A549 (cell line): ENCODE measurements at regions of chr7 and their contacts with region 1.

Region 1: DNA sequence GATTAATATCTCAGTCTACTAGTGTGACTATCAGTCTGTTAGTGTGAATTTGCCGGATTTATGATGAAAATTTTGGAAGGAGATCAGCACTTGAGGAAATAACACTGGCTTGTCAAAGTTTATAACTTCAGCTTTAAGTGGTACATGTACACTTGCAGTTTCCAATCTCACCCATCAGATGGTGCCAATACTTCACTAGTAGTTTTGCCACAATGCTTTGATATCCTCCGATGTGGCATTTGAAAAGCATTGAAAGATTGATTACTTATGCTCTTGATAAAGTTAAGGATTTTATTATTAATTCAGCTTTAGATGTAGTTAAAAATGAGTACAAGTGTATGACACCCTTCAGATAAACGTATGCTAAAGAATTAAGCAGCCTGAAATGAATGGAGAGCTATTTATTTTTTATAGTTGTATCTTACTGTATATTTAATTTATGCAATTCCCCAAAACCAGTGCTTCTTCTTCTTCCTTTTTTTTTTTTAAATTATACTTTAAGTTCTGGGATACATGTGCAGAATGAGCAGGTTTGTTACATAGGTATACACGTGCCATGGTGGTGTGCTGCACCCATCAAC is 98.2 kb downstream of the ANLN start:
- DNase-seq: peak; percentile 47 to 71
- ATAC-seq: peak; percentile 59 to 75; a peak in 4 of 6 replicates
- H3K4me3 ChIP-seq: no peak overlapping the region
- H3K27ac ChIP-seq: no peak overlapping the region
- H3K4me1 ChIP-seq: no peaks in the 10 kb centered on the region
- CTCF ChIP-seq: peak; percentile 93
- EP300 ChIP-seq: no peak
- POLR2A ChIP-seq: no peak
- RAD21 ChIP-seq: peak; percentile 95 to 97

Region 2: GRCh38 chr7:36526863-36527548 is 39.2 kb after region 1 on chr7:
- CTCF ChIA-PET with region 1: interaction called, 16 read pairs
- POLR2A ChIA-PET with region 1: no interaction called
- DNase-seq: peak; percentile 71 to 80
- ATAC-seq: peak; percentile 92 to 96
- H3K4me3 ChIP-seq: no peak overlapping the region
- H3K27ac ChIP-seq: peak overlapping the region; percentile 71 to 74
- H3K4me1 ChIP-seq: peaks cover 23% of the 10 kb centered on the region
- CTCF ChIP-seq: no peak
- EP300 ChIP-seq: no peak
- POLR2A ChIP-seq: no peak
- RAD21 ChIP-seq: no peak; a peak in 1 of 5 replicates

Region 3: DNA sequence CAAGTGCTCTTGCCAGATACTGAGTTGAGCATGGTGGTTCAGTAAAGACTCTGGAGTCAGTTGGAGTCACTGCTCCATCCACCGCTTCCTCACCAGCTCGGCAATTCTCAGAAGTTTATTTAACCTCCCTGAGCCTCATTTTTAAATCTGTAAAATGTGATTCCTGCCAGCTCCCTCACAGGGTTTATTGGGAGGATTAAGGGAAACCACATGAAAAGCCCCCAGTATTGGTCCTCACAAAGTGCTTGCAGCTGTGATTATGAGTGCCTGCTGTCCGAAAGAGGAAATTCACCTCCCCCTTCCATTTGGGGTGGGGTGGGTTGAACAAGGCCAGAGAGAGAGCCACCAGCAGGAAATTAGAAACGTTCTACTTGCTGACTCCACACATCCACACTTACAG is 137.4 kb after region 1 on chr7:
- CTCF ChIA-PET with region 1: interaction called, 10 read pairs
- POLR2A ChIA-PET with region 1: no interaction called
- DNase-seq: no peak
- ATAC-seq: no peak
- H3K4me3 ChIP-seq: no peak overlapping the region
- H3K27ac ChIP-seq: no peak overlapping the region
- H3K4me1 ChIP-seq: no peaks in the 10 kb centered on the region
- CTCF ChIP-seq: no peak
- EP300 ChIP-seq: no peak
- POLR2A ChIP-seq: no peak
- RAD21 ChIP-seq: no peak

Region 4: GRCh38 chr7:36677769-36678437 is 190.1 kb after region 1 on chr7:
- CTCF ChIA-PET with region 1: interaction called, 261 read pairs
- POLR2A ChIA-PET with region 1: no interaction called
- DNase-seq: no peak
- ATAC-seq: no peak
- H3K4me3 ChIP-seq: no peak overlapping the region
- H3K27ac ChIP-seq: no peak overlapping the region
- H3K4me1 ChIP-seq: no peaks in the 10 kb centered on the region
- CTCF ChIP-seq: no peak
- EP300 ChIP-seq: no peak
- POLR2A ChIP-seq: no peak
- RAD21 ChIP-seq: no peak

Region 5: DNA sequence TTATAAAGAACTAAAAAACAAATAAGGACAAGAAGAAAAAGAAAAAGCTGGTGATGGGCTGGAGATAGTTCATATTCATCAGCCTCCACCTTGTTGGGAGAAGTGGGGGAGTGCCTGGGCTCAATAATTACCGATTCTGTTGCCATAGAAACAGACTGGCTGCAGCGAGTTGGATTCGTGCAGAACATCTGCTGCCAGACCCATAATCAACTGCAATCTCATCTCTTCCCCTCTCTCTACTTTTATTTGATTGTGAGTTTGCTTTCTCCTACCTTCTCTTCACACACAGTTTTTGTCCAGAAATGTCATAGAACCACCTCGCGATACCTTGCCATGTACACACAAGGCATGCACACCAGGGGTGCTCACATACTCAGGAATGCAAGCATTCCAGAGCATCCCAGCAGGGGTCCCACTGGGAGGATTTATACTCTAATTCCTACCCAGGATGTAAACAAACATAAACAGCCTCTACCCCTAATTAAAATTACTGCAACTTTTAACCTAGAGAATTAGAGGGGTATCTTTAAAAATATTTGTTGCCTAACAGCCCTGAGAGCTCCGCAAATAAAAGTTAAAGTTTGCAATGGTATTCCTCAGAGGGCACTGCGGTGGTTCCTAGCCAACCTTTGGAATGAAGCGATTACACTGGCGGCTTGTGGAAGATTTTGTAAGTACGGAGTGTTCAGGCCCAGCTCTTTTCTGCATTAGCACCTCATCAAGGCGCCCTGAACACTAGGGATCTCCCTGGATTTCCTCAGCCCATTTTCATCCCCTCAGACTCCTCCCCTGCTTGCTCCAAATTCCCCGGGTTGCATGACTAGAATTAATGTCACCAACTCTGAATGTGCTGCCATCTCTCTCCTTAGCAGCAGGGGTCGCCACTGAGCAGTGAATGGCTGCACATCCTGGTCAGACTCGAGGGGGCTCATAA is 498.9 kb after region 1 on chr7:
- CTCF ChIA-PET with region 1: interaction called, 12 read pairs
- POLR2A ChIA-PET with region 1: no interaction called
- DNase-seq: peak; percentile 57 to 75
- ATAC-seq: peak; percentile 78 to 90
- H3K4me3 ChIP-seq: no peak overlapping the region
- H3K27ac ChIP-seq: no peak overlapping the region
- H3K4me1 ChIP-seq: no peaks in the 10 kb centered on the region
- CTCF ChIP-seq: peak; percentile 68
- EP300 ChIP-seq: no peak
- POLR2A ChIP-seq: no peak
- RAD21 ChIP-seq: peak; percentile 72 to 82

Region 6: GRCh38 chr7:37201003-37201875 is 713.4 kb after region 1 on chr7:
- CTCF ChIA-PET with region 1: interaction called, 61 read pairs
- POLR2A ChIA-PET with region 1: no interaction called
- DNase-seq: peak; percentile 70 to 84
- ATAC-seq: peak; percentile 85 to 92
- H3K4me3 ChIP-seq: no peak overlapping the region
- H3K27ac ChIP-seq: peak overlapping the region in 1 of 2 experiments; percentile 31; a peak in 1 of 6 replicates
- H3K4me1 ChIP-seq: peaks cover 5% of the 10 kb centered on the region; the same call in 1 of the 3 replicates
- CTCF ChIP-seq: peak; percentile 84
- EP300 ChIP-seq: no peak
- POLR2A ChIP-seq: no peak
- RAD21 ChIP-seq: peak; percentile 76 to 79